Activated CD8-positive, alpha-beta T cell treated with anti-CD3 and anti-CD28 coated beads for 36 hours (primary cell): ENCODE measurements at regions of chr2 and their contacts with region 1.

Region 1: GRCh38 chr2:175282290-175282689 is 100.8 kb upstream of the ATP5MC3 start:
- DNase-seq: no peak
- ATAC-seq: peak; percentile 99
- H3K4me3 Mint-ChIP-seq: no peak overlapping the region
- H3K27ac Mint-ChIP-seq: no peak overlapping the region
- H3K4me1 Mint-ChIP-seq: peaks cover 3% of the 10 kb centered on the region
- H3K27me3 Mint-ChIP-seq: peaks cover 3% of the 10 kb centered on the region
- CTCF ChIP-seq: peak; percentile 61

Region 2: GRCh38 chr2:175030380-175031271 is 251.7 kb before region 1 on chr2:
- CTCF ChIA-PET with region 1: interaction called, 3 read pairs
- POLR2A ChIA-PET with region 1: no interaction called
- intact Hi-C with region 1: loop called (anchors 10 kb)
- DNase-seq: peak; percentile 56
- ATAC-seq: no peak
- H3K4me3 Mint-ChIP-seq: no peak overlapping the region
- H3K27ac Mint-ChIP-seq: no peak overlapping the region
- H3K4me1 Mint-ChIP-seq: no peaks in the 10 kb centered on the region
- H3K27me3 Mint-ChIP-seq: no peaks in the 10 kb centered on the region
- CTCF ChIP-seq: no peak

Region 3: DNA sequence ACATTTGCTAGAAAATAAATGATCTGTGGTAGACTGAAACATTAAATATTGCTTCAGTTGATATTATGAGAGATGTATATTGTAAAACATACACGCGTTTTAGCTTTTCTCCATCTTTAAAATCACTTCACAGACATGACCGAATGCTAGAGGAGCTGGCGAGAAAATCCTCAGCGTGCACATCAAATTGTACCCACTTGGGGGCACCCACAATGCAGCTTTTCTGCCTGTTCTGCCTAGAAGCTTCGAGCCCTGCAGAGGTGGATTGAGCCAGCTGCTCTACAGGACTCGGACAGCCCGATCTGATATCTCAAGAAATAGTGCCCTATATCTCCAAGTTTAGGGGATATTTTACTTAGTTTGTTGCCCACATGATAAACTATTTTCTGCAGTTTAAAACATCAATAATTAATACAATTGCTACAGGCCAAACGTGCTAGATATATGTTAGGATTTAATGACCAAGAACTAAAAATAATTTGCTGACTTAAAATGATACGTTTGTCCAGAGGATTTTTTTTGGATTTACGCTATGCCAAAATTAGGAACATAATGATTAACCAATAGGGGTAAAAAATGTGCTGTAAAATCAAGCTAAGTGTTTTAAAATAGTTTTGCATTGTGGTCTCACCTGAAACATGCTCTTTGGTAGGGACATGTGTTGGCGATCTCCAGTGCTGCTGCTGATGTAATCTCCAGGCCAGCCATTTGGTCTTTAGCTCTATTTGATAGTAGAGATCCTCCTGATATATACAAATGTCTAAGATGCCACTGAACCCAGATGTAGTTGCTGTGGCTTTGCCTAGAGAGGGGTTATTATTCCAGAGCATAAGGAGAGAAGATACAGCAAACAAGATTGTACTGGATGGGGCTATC is 78.4 kb before region 1 on chr2:
- CTCF ChIA-PET with region 1: interaction called, 55 read pairs
- POLR2A ChIA-PET with region 1: no interaction called
- intact Hi-C with region 1: loop called (anchors 2 kb)
- DNase-seq: peak; percentile 77
- ATAC-seq: peak; percentile 95
- H3K4me3 Mint-ChIP-seq: no peak overlapping the region
- H3K27ac Mint-ChIP-seq: no peak overlapping the region
- H3K4me1 Mint-ChIP-seq: peaks cover 4% of the 10 kb centered on the region
- H3K27me3 Mint-ChIP-seq: peaks cover 16% of the 10 kb centered on the region
- CTCF ChIP-seq: peak; percentile 63

Region 4: DNA sequence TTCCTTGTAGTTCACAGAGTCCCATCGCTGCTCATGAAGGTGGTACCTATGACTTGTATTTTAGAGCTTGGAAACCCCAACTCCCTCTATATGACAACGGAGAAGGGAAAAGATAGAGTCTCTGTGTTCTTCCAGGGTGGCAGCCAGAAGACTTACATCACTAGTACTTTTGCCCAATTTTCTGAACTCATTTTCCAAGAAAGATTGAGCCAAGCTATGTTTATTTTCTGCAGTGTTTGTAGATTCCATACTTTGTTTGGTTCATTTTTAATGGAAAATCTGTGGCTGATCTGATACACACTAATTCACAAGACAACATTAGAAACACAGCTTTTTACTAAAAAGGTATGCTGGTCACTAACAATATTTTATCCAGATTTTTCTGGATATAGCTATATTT is 40.6 kb before region 1 on chr2:
- CTCF ChIA-PET with region 1: interaction called, 12 read pairs
- POLR2A ChIA-PET with region 1: no interaction called
- intact Hi-C with region 1: no loop called
- DNase-seq: no peak
- ATAC-seq: no peak
- H3K4me3 Mint-ChIP-seq: no peak overlapping the region
- H3K27ac Mint-ChIP-seq: no peak overlapping the region
- H3K4me1 Mint-ChIP-seq: no peaks in the 10 kb centered on the region
- H3K27me3 Mint-ChIP-seq: peaks cover 31% of the 10 kb centered on the region
- CTCF ChIP-seq: no peak

Region 5: GRCh38 chr2:175256889-175257585 is 25.3 kb before region 1 on chr2:
- CTCF ChIA-PET with region 1: interaction called, 44 read pairs
- POLR2A ChIA-PET with region 1: interaction called, 3 read pairs
- intact Hi-C with region 1: no loop called
- DNase-seq: no peak
- ATAC-seq: no peak
- H3K4me3 Mint-ChIP-seq: no peak overlapping the region
- H3K27ac Mint-ChIP-seq: no peak overlapping the region
- H3K4me1 Mint-ChIP-seq: no peaks in the 10 kb centered on the region
- H3K27me3 Mint-ChIP-seq: peaks cover 19% of the 10 kb centered on the region
- CTCF ChIP-seq: no peak